ENCODE measurements at regions of chr11 and their contacts with region 1.

Region 1: GRCh38 chr11:82927254-82927880 is 25.8 kb downstream of the DDIAS start:
- DNase-seq: peak; percentile 57
- CTCF ChIP-seq: peak; percentile 60

Region 2: GRCh38 chr11:82775736-82776346 is 151.5 kb before region 1 on chr11:
- CTCF ChIA-PET with region 1: no interaction called
- POLR2A ChIA-PET with region 1: no interaction called
- DNase-seq: peak; percentile 56
- CTCF ChIP-seq: peak; percentile 72

Region 3: DNA sequence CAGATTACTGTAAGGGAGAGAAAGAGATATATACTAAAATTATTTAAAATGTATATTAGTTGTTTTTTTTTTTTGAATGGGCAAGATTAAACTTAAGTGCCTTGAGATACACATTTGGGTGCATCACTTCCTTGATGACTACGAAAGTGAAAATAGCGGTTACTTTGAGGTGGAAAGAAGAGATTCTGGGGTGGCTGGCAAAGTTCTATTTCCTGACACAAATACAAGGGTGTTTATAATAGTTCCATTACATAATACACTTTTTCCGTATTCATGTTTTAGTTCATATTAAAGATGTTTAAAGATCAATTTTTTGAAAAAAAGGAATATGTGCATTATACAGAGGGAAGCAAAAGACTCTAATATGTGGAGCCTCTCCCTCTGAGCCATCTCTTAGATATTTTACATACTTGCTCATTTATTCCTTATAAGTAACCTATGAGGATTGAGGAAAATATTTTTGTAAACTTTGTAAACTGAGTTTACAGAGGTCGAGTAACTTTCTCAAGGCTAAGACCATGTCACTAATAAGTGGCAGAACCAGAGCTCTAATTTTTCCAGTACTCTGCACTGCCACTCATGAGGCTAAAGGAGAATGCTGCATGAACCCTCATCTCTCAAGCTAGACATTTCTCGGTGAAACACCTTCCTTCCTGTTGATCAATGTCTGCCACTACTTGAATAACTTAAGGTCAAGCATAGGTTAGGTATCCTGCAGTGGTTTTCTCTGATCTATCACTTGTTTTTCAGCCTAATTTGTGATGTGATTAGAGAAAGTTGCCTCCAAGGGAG is 32.8 kb after region 1 on chr11:
- CTCF ChIA-PET with region 1: interaction called, 13 read pairs
- POLR2A ChIA-PET with region 1: no interaction called
- DNase-seq: peak; percentile 29
- CTCF ChIP-seq: no peak